Dorsolateral prefrontal cortex (tissue), 120 donors: ENCODE measurements at regions of chr19 and their contacts with region 1.

Region 1: GRCh38 chr19:38618590-38619360 is at the start of gene EIF3K:
- DNase-seq: peak; percentile 96 to 99 (median 99)
- H3K4me3 ChIP-seq: peak within 1 kb of the TSS; percentile 61 to 100 (median 95)
- H3K27ac ChIP-seq: peak within 1 kb of the TSS; percentile 10 to 95 (median 87)
- H3K27me3 ChIP-seq: no peaks in the 10 kb centered on the region
- CTCF ChIP-seq: peak in 38 of 56 donors; percentile 7 to 58 (median 34)
- total RNA-seq, gene EIF3K: 165 to 292 (median 241) TPM

Region 2: DNA sequence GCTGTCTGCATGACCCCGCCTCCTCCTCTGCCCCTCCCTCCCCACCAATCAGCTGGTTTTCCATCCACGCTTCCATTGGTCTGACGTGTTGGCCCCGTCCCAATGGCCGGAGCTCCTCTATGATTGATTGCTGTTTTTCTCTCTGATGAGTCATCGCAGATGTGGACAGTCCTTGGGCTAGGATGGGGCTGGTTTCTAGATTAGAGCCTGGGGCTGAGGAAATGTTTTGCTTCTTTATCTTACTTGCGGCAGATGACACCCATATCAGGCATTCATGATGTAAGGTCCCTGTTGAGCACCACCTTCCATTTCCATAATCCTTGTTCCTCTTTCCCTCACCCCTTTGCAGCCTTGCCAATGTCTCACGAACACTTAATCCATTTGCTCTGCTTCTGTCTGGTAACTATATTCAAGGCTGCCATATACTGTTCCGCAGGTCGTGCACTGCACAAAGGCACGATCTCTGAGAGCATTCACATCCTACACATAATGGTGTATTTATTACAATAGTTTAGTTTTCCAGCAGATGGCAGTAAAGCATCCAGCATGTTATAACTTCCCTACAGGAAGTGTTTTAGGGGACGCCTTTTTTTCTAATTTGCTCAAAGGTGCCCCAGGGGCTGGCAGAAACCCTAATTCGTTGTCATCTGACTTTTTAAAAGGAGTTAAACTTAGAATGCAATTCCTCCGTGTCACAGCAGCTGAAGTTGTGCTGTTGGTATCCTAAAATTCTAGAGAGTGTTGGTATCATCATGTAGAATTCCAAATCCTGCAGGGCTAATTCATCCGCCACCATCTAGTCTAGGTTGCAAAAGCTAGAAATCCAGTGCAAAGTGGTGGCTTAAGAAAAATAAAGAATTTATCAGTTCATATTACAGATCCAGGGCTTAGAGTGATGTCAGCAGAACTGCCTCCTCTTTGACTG is 74.5 kb before region 1 on chr19:
- intact Hi-C with region 1: loop called (anchors 5 kb)
- DNase-seq: peak; percentile 30 to 94 (median 84)
- H3K4me3 ChIP-seq: peak overlapping the region in 56 of 59 donors; percentile 5 to 69 (median 45)
- H3K27ac ChIP-seq: peak overlapping the region in 58 of 59 donors; percentile 19 to 94 (median 82)
- H3K27me3 ChIP-seq: no peaks in the 10 kb centered on the region
- CTCF ChIP-seq: peak; percentile 45 to 80 (median 70)